Activated CD4-positive, alpha-beta T cell treated with anti-CD3 and anti-CD28 coated beads for 36 hours (primary cell): ENCODE measurements at regions of chr10 and their contacts with region 1.

Region 1: DNA sequence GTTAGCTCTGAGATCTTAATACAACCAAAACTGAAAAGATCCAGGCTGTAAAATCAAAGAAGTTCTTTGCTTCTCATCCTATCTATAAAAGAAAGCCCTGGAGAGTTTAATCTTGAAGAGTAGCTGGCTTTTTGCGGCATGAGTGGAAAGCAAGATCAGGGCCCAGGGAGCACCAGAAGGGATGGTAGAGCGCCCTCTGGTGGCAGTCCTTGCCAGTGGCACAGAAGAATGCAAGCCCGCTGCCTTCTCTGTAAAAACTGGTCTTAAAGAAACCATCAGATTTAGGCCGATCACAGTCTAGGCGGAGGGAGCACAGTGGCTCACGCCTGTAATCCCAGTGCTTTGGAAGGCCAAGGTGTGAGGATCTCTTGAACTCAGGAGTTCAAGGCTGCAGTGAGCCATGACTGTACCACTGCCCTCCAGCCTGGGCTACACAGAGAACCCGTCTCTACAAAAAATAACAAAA is 35.6 kb downstream of the CPN1 start:
- DNase-seq: peak; percentile 93
- ATAC-seq: peak; percentile 69
- H3K4me3 Mint-ChIP-seq: no peak overlapping the region
- H3K27ac Mint-ChIP-seq: no peak overlapping the region
- H3K4me1 Mint-ChIP-seq: peaks cover 6% of the 10 kb centered on the region
- H3K27me3 Mint-ChIP-seq: peaks cover 2% of the 10 kb centered on the region

Region 2: DNA sequence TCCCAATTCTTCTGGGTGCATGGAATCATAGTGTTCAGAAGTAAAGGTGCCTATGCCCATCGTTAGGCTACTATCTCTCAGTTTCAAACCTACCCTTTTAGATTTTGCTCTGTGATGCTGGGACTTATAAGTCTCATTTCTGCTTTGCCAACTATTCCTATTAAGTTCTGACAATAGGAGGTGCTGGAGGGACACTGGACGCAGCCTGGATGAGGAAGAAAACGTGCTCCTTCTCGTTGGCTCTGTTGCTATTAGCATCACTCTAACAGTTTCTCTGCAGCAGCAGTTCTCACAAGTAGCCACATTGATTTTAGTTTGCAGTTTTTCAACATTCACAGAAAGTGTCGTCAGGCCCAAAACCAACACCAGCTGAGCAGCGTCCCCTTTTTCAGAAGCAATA is 191.2 kb before region 1 on chr10:
- CTCF ChIA-PET with region 1: interaction called, 33 read pairs
- POLR2A ChIA-PET with region 1: no interaction called
- intact Hi-C with region 1: no loop called
- DNase-seq: no peak
- ATAC-seq: no peak
- H3K4me3 Mint-ChIP-seq: no peak overlapping the region
- H3K27ac Mint-ChIP-seq: no peak overlapping the region
- H3K4me1 Mint-ChIP-seq: no peaks in the 10 kb centered on the region
- H3K27me3 Mint-ChIP-seq: peaks cover 9% of the 10 kb centered on the region

Region 3: GRCh38 chr10:99976886-99977665 is 69.0 kb before region 1 on chr10:
- CTCF ChIA-PET with region 1: interaction called, 4 read pairs
- POLR2A ChIA-PET with region 1: no interaction called
- intact Hi-C with region 1: loop called (anchors 2 to 10 kb)
- DNase-seq: no peak
- ATAC-seq: no peak
- H3K4me3 Mint-ChIP-seq: no peak overlapping the region
- H3K27ac Mint-ChIP-seq: no peak overlapping the region
- H3K4me1 Mint-ChIP-seq: no peaks in the 10 kb centered on the region
- H3K27me3 Mint-ChIP-seq: no peaks in the 10 kb centered on the region

Region 4: DNA sequence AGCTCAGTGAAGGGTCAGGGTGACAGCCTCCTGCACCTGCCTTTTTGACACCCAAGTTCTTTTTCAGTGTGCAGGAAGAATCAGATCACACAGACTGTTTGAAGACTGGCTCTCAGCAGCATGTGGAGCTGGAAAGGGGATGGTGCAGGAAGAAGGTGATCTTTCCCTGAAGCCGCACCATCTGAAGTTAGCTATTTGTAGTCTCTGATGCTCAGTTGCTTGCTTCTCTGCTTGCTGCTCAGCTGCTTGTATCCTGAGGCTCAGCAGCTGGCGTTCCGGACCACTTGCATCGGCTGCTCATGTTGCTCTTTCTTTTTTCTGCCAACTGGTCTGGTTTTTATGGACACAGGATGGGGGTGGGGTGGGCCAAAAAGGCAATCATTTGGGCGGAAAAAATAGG is 20.5 kb before region 1 on chr10:
- CTCF ChIA-PET with region 1: interaction called, 11 read pairs
- POLR2A ChIA-PET with region 1: no interaction called
- intact Hi-C with region 1: no loop called
- DNase-seq: no peak
- ATAC-seq: no peak
- H3K4me3 Mint-ChIP-seq: no peak overlapping the region
- H3K27ac Mint-ChIP-seq: no peak overlapping the region
- H3K4me1 Mint-ChIP-seq: peaks cover under 1% of the 10 kb centered on the region
- H3K27me3 Mint-ChIP-seq: no peaks in the 10 kb centered on the region

Region 5: DNA sequence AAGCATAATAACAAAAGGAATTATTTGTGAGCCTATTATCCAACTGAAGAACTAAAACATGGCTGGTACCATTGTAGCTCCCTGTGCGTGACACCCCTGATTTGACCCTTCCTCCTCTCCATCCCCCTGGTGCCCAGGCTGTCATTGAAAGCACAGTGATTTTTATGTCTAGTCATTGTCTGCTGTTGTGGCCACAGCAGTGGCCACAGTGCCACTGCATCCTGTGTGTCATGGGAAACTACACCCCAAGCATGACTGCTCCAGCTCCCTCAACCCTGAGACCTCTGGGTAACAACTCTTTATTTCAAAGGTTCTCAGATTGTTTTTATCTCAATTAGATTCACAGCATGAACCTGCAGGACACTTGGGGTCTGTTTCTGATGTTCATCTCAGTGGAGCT is 87.7 kb after region 1 on chr10:
- CTCF ChIA-PET with region 1: no interaction called
- POLR2A ChIA-PET with region 1: no interaction called
- intact Hi-C with region 1: no loop called
- DNase-seq: no peak
- ATAC-seq: no peak
- H3K4me3 Mint-ChIP-seq: no peak overlapping the region
- H3K27ac Mint-ChIP-seq: no peak overlapping the region
- H3K4me1 Mint-ChIP-seq: no peaks in the 10 kb centered on the region
- H3K27me3 Mint-ChIP-seq: peaks cover 16% of the 10 kb centered on the region